ENCODE measurements at regions of chr1 and their contacts with region 1.

Region 1: GRCh38 chr1:59738152-59738551 is 76.6 kb upstream of the HOOK1 start:
- DNase-seq: no peak

Region 2: GRCh38 chr1:59506952-59507351 is 231.2 kb before region 1 on chr1:
- intact Hi-C with region 1: no loop called
- DNase-seq: no peak

Region 3: DNA sequence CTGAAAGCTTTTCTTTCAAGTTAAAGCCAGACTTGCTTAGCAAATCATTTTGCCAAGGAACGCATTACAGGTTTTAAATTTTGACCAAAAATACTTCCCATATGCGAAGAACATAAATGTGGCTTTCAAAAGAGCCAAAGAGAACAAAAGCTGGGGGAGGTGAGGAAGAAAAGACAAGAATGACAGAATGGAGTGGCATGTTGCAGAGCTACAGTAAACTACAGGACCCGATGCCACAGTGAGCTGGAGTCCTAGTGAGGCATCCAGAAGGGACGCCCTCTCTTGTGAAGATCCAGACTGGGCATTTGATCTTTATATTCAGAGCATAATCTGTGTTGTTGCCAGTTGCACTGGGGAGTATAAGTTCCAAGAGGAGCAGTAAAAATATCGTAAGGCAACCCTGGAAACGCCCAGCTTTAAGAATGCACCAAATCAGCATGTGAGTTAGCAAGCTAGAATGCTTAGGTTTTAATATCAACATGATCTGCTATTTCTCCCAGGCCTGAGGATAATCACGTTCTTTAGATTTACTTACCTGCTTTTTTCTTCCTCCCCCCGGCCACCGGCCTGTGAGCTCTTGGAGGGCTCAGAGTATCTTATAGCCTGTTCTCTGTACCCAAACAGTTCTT is 28.2 kb after region 1 on chr1:
- intact Hi-C with region 1: loop called in 1 of 2 experiments (anchors 1 kb)
- DNase-seq: no peak

Measured in posterior vena cava (tissue), 2 donors.